ENCODE measurements at regions of chr1 and their contacts with region 1.

Region 1: GRCh38 chr1:64823691-64824476 is 79.0 kb downstream of the RAVER2 start:
- DNase-seq: peak; percentile 81
- ATAC-seq: no peak
- H3K4me3 Mint-ChIP-seq: no peak overlapping the region
- H3K27ac Mint-ChIP-seq: no peak overlapping the region
- H3K4me1 Mint-ChIP-seq: peaks cover 30% of the 10 kb centered on the region
- H3K27me3 Mint-ChIP-seq: no peaks in the 10 kb centered on the region
- CTCF ChIP-seq: peak; percentile 90

Region 2: GRCh38 chr1:64268653-64269557 is 555.0 kb before region 1 on chr1:
- CTCF ChIA-PET with region 1: interaction called, 10 read pairs
- POLR2A ChIA-PET with region 1: no interaction called
- intact Hi-C with region 1: loop called (anchors 10 kb)
- DNase-seq: peak; percentile 77
- ATAC-seq: peak; percentile 65
- H3K4me3 Mint-ChIP-seq: no peak overlapping the region
- H3K27ac Mint-ChIP-seq: no peak overlapping the region
- H3K4me1 Mint-ChIP-seq: no peaks in the 10 kb centered on the region
- H3K27me3 Mint-ChIP-seq: peaks cover 8% of the 10 kb centered on the region
- CTCF ChIP-seq: peak; percentile 82

Region 3: DNA sequence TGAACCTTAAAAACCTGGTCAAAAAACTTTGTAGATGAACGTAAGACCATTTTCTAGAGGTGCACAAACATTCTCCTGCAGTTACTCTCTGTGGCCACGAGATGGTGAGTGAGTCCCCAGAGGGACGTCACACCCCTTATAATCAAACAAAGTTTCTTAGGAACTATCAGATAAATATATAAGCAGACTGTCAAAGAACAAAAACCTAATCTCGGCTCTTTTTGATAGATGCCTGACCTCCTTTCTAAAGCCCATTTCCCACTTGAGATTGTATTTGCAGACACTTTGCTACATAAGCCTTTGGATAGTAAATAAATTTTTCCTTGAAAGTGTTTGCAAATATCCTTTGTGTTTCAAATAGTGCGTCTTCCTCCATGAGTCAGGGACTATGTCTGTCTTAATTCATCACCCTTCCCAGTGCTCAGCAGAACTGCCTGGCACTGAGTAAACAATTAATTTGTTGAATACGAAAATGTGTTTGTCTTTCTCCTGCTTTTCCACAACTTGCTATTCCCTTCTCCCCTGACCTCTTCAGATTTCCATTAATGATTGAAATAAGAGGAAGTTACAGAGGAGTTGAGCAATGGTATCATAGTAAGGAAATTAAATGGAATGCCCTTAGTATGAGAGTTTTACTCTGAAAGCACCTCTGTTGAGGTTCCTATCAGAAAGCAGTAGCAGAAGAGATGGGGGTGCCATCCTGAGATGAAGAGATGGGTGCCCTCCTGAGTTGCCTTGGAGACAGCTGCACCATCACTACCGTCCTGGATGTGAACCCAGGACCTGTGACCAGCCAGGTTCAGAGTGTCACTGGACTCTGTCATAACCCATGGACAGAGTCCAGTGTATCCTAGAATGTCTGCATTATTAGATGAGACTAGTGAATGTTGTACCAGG is 136.8 kb before region 1 on chr1:
- CTCF ChIA-PET with region 1: interaction called, 9 read pairs
- POLR2A ChIA-PET with region 1: no interaction called
- intact Hi-C with region 1: loop called (anchors 2 kb)
- DNase-seq: peak; percentile 34
- ATAC-seq: peak; percentile 73
- H3K4me3 Mint-ChIP-seq: no peak overlapping the region
- H3K27ac Mint-ChIP-seq: no peak overlapping the region
- H3K4me1 Mint-ChIP-seq: peaks cover 5% of the 10 kb centered on the region
- H3K27me3 Mint-ChIP-seq: no peaks in the 10 kb centered on the region
- CTCF ChIP-seq: peak; percentile 86

Region 4: GRCh38 chr1:64744492-64745180 is 79.2 kb before region 1 on chr1 and contains the start of gene RAVER2:
- CTCF ChIA-PET with region 1: interaction called, 9 read pairs
- POLR2A ChIA-PET with region 1: no interaction called
- intact Hi-C with region 1: loop called (anchors 5 kb)
- DNase-seq: peak; percentile 73
- ATAC-seq: peak; percentile 83
- H3K4me3 Mint-ChIP-seq: peak within 1 kb of the TSS; percentile 80
- H3K27ac Mint-ChIP-seq: peak within 1 kb of the TSS; percentile 51
- H3K4me1 Mint-ChIP-seq: peaks cover 14% of the 10 kb centered on the region
- H3K27me3 Mint-ChIP-seq: no peaks in the 10 kb centered on the region
- CTCF ChIP-seq: peak; percentile 78
- total RNA-seq, gene RAVER2: 2.6 to 3.1 TPM

Region 5: DNA sequence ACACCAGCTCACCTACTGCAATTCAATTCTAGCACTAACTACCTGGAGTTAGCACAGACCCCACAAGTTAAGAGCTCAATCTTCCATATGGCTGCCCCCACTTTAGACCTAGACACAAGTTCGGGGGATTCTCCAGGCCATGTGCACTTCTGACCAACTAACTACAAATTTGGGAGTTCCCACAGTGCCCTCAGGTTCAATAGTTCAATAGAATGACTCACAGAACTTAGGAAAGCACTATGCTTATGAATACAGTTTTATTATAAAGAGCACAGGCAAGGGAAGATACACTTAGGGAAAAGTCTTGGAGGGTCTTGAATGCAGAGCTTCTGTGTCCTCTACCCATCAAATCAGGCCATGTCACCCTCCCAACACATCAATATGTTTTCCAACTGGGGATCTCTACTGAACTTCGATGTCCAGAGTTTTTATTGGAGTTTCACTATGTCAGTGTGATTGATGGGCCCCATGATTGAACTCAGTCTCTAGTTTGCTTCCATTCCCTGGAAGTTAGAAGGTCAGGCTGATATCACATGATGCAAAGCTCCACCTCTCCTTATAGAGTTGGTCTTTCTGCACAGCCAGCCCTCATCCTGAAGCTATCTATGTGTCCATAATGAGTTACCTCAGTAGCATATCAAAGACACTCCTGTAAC is 32.9 kb before region 1 on chr1:
- CTCF ChIA-PET with region 1: no interaction called
- POLR2A ChIA-PET with region 1: no interaction called
- intact Hi-C with region 1: no loop called
- DNase-seq: no peak
- ATAC-seq: no peak
- H3K4me3 Mint-ChIP-seq: no peak overlapping the region
- H3K27ac Mint-ChIP-seq: no peak overlapping the region
- H3K4me1 Mint-ChIP-seq: no peaks in the 10 kb centered on the region
- H3K27me3 Mint-ChIP-seq: no peaks in the 10 kb centered on the region
- CTCF ChIP-seq: no peak

Region 6: GRCh38 chr1:64839732-64840405 is 16.0 kb after region 1 on chr1:
- CTCF ChIA-PET with region 1: interaction called, 13 read pairs
- POLR2A ChIA-PET with region 1: no interaction called
- intact Hi-C with region 1: no loop called
- DNase-seq: no peak
- ATAC-seq: no peak
- H3K4me3 Mint-ChIP-seq: no peak overlapping the region
- H3K27ac Mint-ChIP-seq: no peak overlapping the region
- H3K4me1 Mint-ChIP-seq: peaks cover 2% of the 10 kb centered on the region
- H3K27me3 Mint-ChIP-seq: no peaks in the 10 kb centered on the region
- CTCF ChIP-seq: no peak